ENCODE measurements at regions of chr2 and their contacts with region 1.

Region 1: GRCh38 chr2:11124503-11125068 is 30.7 kb upstream of the SLC66A3 start:
- DNase-seq: peak; percentile 44
- ATAC-seq: peak; percentile 83
- H3K4me3 ChIP-seq: no peak overlapping the region
- H3K27ac ChIP-seq: no peak overlapping the region
- H3K4me1 ChIP-seq: peaks cover 12% of the 10 kb centered on the region
- H3K27me3 ChIP-seq: no peaks in the 10 kb centered on the region
- CTCF ChIP-seq: peak; percentile 95
- POLR2A ChIP-seq: peak; percentile 51; the same call in 1 of the 2 replicates
- RAD21 ChIP-seq: peak; percentile 99

Region 2: GRCh38 chr2:10832203-10832936 is 292.2 kb before region 1 on chr2:
- CTCF ChIA-PET with region 1: interaction called, 35 read pairs
- POLR2A ChIA-PET with region 1: no interaction called
- dilution Hi-C with region 1: no loop called
- in situ Hi-C with region 1: loop called (anchors 5 kb)
- intact Hi-C with region 1: loop called (anchors 1 kb)
- DNase-seq: peak; percentile 77
- ATAC-seq: peak; percentile 94
- H3K4me3 ChIP-seq: no peak overlapping the region
- H3K27ac ChIP-seq: no peak overlapping the region
- H3K4me1 ChIP-seq: no peaks in the 10 kb centered on the region
- H3K27me3 ChIP-seq: peaks cover 34% of the 10 kb centered on the region
- CTCF ChIP-seq: peak; percentile 97
- POLR2A ChIP-seq: no peak
- RAD21 ChIP-seq: peak; percentile 98

Region 3: DNA sequence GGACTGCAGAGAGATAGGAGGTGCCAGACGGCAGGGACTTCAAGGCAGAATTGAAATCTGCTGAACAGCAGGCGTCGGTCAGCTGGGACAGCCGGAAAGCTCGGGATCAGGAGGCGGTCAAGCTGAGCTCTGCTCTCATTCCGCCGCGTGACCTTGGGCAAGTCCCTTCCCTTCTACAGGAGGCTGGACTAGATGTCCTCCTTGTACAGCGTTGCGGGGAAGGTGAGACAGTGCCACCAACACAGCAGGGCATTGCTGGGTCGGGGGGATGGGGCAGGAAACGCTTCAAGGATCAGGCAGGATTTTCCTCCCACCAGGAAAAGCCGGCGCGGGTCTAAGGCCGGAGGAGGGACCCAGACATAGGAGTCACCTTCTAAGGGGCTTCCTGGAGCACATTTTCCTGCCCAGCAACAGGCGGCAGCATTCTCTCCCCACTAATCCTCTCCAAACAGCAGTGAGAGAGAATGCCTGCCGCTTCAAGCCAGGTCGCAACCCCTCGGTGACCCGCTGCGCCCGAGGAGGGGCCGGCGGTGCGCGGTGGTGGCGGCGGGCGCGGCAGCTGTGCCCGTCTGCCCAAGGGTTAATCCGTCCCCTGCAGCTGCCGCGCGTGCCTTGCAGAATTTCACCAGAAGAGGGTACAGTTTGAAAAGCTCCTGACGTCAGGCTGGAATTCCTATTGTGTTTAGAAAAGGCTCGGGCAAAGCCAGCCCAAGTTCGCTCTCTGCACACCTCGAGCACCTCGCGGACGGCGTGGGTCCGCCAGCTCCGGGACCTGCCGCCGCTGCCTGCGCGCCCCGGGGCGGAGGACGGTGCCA is 213.1 kb before region 1 on chr2 and contains the start of gene KCNF1:
- CTCF ChIA-PET with region 1: interaction called, 4 read pairs
- POLR2A ChIA-PET with region 1: no interaction called
- dilution Hi-C with region 1: no loop called
- in situ Hi-C with region 1: no loop called
- intact Hi-C with region 1: loop called (anchors 2 kb)
- DNase-seq: peak; percentile 65
- ATAC-seq: peak; percentile 84
- H3K4me3 ChIP-seq: peak within 1 kb of the TSS; percentile 46
- H3K27ac ChIP-seq: no peak within 1 kb of the TSS; the same call in 1 of the 2 replicates
- H3K4me1 ChIP-seq: no peaks in the 10 kb centered on the region
- H3K27me3 ChIP-seq: no peaks in the 10 kb centered on the region
- CTCF ChIP-seq: peak; percentile 46
- POLR2A ChIP-seq: no peak
- RAD21 ChIP-seq: peak; percentile 49
- total RNA-seq, gene KCNF1: 0.54 and 0.56 TPM in 2 replicates

Region 4: DNA sequence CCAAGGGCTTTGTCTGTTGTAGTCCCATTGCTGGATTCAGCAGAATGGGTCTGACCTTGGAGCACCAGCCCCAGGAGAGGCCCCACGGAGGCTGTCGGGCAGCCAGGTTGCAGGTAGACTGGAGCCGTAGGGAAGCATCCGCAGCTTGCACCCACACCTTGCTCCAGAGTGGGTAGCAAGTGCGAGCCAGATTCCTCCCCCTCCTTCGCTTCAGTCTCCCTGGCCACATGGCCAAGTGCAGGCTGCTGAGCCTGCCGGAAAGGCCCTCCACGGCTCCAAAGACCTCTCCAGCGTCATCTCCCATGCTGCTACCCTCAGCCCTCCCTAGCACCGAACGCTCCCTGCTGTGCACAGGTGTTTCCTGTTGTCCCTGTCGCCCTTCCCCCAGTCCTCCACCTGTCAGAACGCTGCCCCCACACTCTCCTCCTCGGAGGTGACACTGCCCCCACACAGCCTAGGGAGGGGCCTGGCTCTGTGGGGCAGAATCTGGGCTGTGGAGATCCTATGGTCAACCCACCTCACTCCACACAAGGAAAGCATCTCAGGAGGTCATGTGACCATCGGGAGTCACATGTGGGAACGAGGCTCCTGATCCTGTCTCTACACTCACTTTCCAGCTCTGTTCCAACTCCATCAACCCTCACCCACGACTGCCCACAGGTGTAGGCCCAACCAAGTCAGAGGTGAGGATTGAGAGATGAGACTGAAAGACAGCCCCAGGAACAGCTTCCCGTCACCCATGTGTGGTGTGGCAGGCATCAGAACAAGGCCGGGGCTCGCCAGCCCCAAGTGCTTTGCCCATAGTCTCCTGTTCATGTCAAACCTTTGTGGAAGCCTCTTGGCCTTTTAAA is 204.6 kb before region 1 on chr2:
- CTCF ChIA-PET with region 1: no interaction called
- POLR2A ChIA-PET with region 1: no interaction called
- dilution Hi-C with region 1: no loop called
- in situ Hi-C with region 1: loop called (anchors 5 kb)
- intact Hi-C with region 1: no loop called
- DNase-seq: no peak
- ATAC-seq: no peak
- H3K4me3 ChIP-seq: no peak overlapping the region
- H3K27ac ChIP-seq: no peak overlapping the region
- H3K4me1 ChIP-seq: peaks cover 13% of the 10 kb centered on the region
- H3K27me3 ChIP-seq: no peaks in the 10 kb centered on the region
- CTCF ChIP-seq: no peak
- POLR2A ChIP-seq: no peak
- RAD21 ChIP-seq: no peak

Region 5: DNA sequence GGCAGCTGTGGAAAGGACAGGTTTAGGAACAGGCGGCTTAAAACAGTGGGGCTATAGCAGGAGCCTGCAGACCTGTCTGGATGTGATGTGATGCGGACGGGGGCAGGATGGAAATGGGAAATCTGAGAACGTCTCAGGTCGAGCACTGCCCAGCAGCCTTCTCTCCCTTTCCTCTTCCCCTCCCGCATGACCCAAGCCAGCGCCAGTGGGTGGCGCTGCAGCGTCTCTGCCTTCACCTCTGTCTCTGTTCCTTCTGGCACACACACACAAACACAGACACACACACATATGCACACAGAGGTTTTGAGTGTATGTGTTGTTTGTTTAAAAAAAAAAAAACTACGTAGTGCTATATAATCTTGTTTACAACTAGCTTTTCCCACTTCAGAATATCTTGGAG is 51.3 kb before region 1 on chr2:
- CTCF ChIA-PET with region 1: interaction called, 4 read pairs
- POLR2A ChIA-PET with region 1: no interaction called
- dilution Hi-C with region 1: no loop called
- in situ Hi-C with region 1: no loop called
- intact Hi-C with region 1: loop called (anchors 1 kb)
- DNase-seq: peak; percentile 50
- ATAC-seq: peak; percentile 68
- H3K4me3 ChIP-seq: no peak overlapping the region
- H3K27ac ChIP-seq: peak overlapping the region; percentile 90
- H3K4me1 ChIP-seq: peaks cover 12% of the 10 kb centered on the region
- H3K27me3 ChIP-seq: no peaks in the 10 kb centered on the region
- CTCF ChIP-seq: peak; percentile 46
- POLR2A ChIP-seq: no peak
- RAD21 ChIP-seq: peak; percentile 42

Region 6: GRCh38 chr2:11530936-11531361 is 406.4 kb after region 1 on chr2:
- CTCF ChIA-PET with region 1: no interaction called
- POLR2A ChIA-PET with region 1: no interaction called
- dilution Hi-C with region 1: no loop called
- in situ Hi-C with region 1: no loop called
- intact Hi-C with region 1: no loop called
- DNase-seq: no peak
- ATAC-seq: no peak
- H3K4me3 ChIP-seq: no peak overlapping the region
- H3K27ac ChIP-seq: no peak overlapping the region
- H3K4me1 ChIP-seq: no peaks in the 10 kb centered on the region
- H3K27me3 ChIP-seq: peaks cover 24% of the 10 kb centered on the region
- CTCF ChIP-seq: no peak
- POLR2A ChIP-seq: no peak
- RAD21 ChIP-seq: no peak

Region 7: GRCh38 chr2:11753886-11754699 is 629.5 kb after region 1 on chr2:
- CTCF ChIA-PET with region 1: no interaction called
- POLR2A ChIA-PET with region 1: no interaction called
- dilution Hi-C with region 1: no loop called
- in situ Hi-C with region 1: loop called (anchors 25 kb)
- intact Hi-C with region 1: no loop called
- DNase-seq: peak; percentile 61
- ATAC-seq: peak; percentile 75
- H3K4me3 ChIP-seq: no peak overlapping the region
- H3K27ac ChIP-seq: no peak overlapping the region
- H3K4me1 ChIP-seq: peaks cover 13% of the 10 kb centered on the region
- H3K27me3 ChIP-seq: no peaks in the 10 kb centered on the region
- CTCF ChIP-seq: no peak
- POLR2A ChIP-seq: no peak
- RAD21 ChIP-seq: no peak

Measured in IMR-90 (cell line).